ENCODE measurements at regions of chr18 and their contacts with region 1.

Region 1: GRCh38 chr18:79866889-79867574 is 69.3 kb downstream of the KCNG2 start:
- DNase-seq: no peak
- ATAC-seq: no peak
- H3K4me3 ChIP-seq: no peak overlapping the region
- H3K4me1 ChIP-seq: no peaks in the 10 kb centered on the region
- CTCF ChIP-seq: no peak

Region 2: GRCh38 chr18:79799619-79800370 is 67.2 kb before region 1 on chr18:
- intact Hi-C with region 1: loop called in 1 of 2 experiments (anchors 10 kb)
- DNase-seq: peak in 1 of 3 donors; percentile 45
- ATAC-seq: no peak
- H3K4me3 ChIP-seq: no peak overlapping the region
- H3K4me1 ChIP-seq: peaks cover 16% of the 10 kb centered on the region
- CTCF ChIP-seq: no peak